Sciatic nerve (tissue), 2 donors: ENCODE measurements at regions of chr2 and their contacts with region 1.

Region 1: GRCh38 chr2:109403841-109404201 is 209.9 kb downstream of the SEPTIN10 start:
- DNase-seq: no peak
- ATAC-seq: no peak

Region 2: GRCh38 chr2:109380502-109381326 is 23.1 kb before region 1 on chr2:
- intact Hi-C with region 1: loop called (anchors 1 kb)
- DNase-seq: peak; percentile 32
- ATAC-seq: no peak